ENCODE measurements at regions of chr6 and their contacts with region 1.

Region 1: DNA sequence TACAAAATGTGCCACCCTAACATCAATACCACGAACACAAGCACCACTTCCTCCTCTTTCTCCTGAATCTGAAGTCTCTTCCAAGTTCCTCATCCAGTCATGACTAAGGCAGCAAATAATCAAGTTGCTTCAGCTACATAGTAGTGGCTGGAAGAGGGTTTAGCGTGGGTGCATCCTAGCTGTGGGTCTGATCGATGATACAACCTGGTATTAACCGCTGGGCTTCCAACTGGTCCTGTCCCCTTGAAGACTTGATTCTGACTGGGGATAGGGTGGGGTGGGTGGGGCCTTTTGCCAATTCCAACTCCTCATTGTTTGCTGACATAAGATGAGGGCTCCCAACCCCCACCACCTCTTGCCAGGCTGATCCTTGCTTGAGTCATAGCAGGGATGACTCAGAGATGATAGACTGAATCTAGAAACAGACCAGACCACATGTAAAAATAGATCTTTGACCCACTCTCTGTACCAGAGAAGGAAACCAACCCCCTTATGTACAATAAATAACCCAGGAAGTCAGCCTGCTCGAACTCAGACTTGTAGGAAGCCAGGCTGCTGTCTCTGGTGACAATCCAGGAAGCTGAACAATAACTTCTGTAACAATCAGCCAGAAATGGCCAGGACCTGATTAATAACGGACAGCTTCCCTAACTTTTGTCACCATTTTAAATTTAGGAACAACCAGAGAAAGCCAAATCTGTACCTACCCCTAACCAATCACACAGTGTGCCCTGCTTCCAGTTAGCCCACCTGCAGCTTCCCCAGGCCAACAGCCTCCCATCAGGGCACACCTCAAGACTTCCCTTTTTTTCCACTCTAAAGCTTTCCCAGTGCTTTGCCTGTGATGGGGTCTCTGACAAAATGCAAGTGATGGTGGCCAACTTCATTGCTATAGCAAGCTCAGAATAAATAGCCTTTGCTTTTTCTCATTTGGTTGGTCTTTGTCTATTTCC is 68.9 kb upstream of the FAM184A start:
- DNase-seq: no peak
- H3K4me3 ChIP-seq: no peak overlapping the region
- H3K27ac ChIP-seq: no peak overlapping the region
- H3K4me1 ChIP-seq: no peaks in the 10 kb centered on the region
- H3K27me3 ChIP-seq: no peaks in the 10 kb centered on the region
- CTCF ChIP-seq: no peak
- POLR2A ChIP-seq: no peak

Region 2: DNA sequence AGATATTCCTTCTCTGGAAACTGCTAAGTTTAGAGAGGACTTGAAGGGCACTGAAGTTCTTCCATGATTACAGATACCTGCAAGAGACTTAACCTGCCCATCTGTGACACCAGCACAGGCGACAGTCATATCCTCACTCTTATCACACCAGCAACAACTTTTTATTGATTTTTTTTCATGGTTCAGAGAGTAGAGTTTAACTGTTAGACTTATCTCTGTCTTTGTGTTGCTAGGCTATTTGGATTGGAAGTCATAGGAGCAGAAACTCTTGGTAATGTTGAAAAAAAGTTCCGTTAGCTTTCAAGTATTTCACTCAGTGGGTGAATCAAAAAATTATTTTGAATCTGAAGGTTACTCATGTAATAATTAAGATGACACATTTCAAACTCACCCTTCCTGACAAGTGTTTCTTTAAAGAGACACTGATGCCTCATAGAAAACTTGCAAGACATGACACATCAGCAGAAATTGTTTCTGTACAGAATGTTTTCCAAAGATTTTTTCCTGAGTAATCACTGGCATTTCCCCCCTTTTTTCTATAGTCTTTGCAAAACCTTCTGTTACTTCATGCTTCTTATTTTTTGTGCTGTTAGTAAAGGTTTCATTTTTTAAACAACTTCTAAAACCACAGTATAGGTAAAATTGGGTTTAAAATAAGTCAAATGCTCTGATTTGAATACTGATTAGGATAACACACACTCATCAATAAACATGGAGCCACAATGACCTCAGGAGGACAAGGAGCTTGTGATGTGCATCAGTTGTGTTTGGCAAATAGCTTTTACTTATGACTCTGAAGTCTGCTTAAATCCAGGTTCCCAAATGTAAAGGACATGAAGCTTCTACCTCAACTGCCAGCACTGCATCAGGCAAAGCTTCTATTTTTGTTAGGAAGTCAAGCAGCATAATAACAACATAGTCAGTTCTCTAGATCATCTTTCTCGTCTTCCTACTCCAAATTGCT is 455.1 kb after region 1 on chr6:
- intact Hi-C with region 1: no loop called
- DNase-seq: no peak
- H3K4me3 ChIP-seq: no peak overlapping the region
- H3K27ac ChIP-seq: no peak overlapping the region
- H3K4me1 ChIP-seq: no peaks in the 10 kb centered on the region
- H3K27me3 ChIP-seq: no peaks in the 10 kb centered on the region
- CTCF ChIP-seq: no peak
- POLR2A ChIP-seq: no peak

Region 3: GRCh38 chr6:119717942-119718341 is 570.6 kb after region 1 on chr6:
- intact Hi-C with region 1: loop called (anchors 10 kb)
- DNase-seq: no peak
- H3K4me3 ChIP-seq: no peak overlapping the region
- H3K27ac ChIP-seq: no peak overlapping the region
- H3K4me1 ChIP-seq: no peaks in the 10 kb centered on the region
- H3K27me3 ChIP-seq: no peaks in the 10 kb centered on the region
- CTCF ChIP-seq: no peak
- POLR2A ChIP-seq: no peak

Region 4: DNA sequence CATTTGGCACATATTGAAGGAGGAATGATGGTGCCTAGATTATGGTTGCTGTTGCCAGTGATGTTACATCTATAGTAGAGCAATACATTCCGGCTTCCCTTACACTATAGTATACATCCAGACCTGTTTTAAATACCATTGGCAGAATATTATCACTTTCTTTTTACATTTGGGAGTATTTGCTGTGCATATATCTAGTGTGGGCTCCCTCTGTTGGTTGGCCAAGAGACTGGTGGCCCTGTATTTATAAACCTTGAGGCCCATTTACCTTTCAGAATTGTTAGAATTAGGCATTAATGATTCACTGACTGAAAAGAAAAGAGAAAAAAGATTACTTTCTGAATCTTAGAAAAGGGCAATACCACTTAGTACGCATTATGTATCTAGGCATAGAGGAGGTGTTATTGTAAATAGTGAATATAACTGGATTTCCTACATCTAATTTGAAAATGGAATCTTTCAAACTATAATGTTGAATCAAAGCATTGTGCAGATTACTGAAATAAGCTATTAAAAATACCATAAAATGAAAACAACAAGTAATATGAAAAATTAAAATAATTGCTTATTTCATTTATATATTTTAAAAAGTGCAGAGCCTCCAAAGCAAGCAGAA is 831.0 kb after region 1 on chr6:
- intact Hi-C with region 1: loop called (anchors 10 kb)
- DNase-seq: no peak
- H3K4me3 ChIP-seq: no peak overlapping the region
- H3K27ac ChIP-seq: no peak overlapping the region
- H3K4me1 ChIP-seq: no peaks in the 10 kb centered on the region
- H3K27me3 ChIP-seq: no peaks in the 10 kb centered on the region
- CTCF ChIP-seq: peak in 3 of 4 experiments; percentile 13 to 47 (median 25)
- POLR2A ChIP-seq: no peak

Measured in prostate gland (tissue), 2 donors.